Heart right ventricle (tissue), 16 donors: ENCODE measurements at regions of chr9 and their contacts with region 1.

Region 1: GRCh38 chr9:116646661-116647512 is 40.2 kb upstream of the TRIM32 start:
- DNase-seq: no peak
- ATAC-seq: peak; percentile 65 to 86 (median 76)
- H3K4me3 ChIP-seq: no peak overlapping the region
- H3K27ac ChIP-seq: peak overlapping the region in 3 of 10 donors; percentile 4 to 53 (median 29)
- H3K4me1 ChIP-seq: peaks cover 0 to 35% (median 14%) of the 10 kb centered on the region in 9 donors
- H3K27me3 ChIP-seq: no peaks in the 10 kb centered on the region
- CTCF ChIP-seq: peak in 8 of 9 donors; percentile 29 to 71 (median 62)

Region 2: DNA sequence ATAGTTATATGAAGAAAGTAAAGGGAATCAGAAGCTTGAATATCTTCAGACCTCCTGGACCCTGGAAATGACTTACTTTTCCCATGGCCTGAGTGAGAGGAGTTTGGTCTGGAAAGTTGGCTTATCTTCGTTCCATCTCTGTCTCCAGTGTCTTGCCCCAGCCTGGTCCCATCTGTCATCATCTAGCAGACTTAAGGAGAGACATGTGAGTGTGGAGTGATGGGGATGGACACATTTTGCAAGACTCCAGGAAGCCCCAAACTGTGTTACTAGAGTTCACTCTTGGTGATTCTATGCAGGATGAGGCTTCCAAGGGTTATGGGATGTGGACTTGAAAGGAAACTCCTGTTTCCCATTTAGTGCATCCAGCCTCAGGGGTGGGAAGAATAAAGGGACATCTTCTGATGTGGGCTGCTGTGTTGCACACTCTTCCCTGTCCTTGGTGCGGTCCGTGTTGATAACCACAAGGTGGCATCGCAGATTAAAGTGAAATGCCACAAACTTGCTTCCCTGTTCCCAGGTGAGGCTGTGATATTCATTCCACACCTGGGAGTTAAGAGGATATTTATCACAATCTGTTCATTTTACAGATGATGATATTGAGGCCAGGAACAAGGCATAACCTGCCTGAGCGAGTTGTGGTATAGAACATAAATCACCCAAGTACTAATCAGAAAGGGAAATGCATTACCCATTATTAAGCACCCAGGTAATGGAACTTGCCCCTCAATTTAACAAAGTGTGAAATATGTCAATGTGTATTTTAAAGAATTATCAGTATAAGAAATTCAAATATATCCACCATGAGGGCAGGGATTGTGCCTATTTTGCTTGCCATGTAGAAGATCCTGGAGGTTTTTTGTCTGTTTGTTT is 763.2 kb before region 1 on chr9:
- intact Hi-C with region 1: loop called in 3 of 10 experiments (anchors 10 kb)
- DNase-seq: peak in 1 of 2 donors; percentile 13
- ATAC-seq: peak in 6 of 8 donors; percentile 43 to 81 (median 64)
- H3K4me3 ChIP-seq: no peak overlapping the region
- H3K27ac ChIP-seq: no peak overlapping the region
- H3K4me1 ChIP-seq: no peaks in the 10 kb centered on the region
- H3K27me3 ChIP-seq: no peaks in the 10 kb centered on the region
- CTCF ChIP-seq: peak; percentile 11 to 66 (median 57)

Region 3: DNA sequence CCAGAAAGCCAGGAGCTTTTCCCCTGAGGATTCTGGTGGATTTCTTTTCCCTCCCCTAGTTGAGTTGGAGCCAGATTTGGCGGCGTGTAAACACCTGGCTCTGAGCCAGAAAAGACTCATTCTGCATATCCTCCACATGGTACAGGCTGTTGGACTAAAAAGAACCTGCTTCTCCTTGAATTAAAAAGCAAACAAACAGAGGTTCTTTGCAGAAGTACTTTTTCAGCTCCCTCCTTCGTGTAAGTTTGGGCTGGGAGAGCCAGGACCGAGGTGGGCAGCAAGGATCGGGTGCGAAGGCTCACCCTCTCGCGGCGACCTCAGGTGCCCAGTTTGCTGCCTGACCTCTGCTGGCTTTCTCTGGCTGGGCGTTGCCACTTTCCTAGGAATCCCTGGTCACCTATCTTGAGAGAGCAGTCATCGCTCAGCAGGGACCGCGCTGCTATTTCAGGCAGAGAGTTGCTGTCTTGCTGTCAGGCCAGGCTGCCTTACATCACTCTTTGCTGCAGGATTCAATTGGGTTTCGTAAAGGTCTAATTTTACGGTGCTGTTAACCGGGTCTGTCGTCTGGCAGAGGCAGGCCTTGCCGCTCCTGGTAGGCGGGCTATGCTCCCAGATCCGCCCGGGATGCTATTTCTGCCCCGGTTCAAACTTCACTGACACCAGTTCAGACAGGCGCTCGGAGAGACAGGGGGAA is 490.1 kb before region 1 on chr9:
- intact Hi-C with region 1: loop called in 7 of 10 experiments (anchors 5 to 10 kb)
- DNase-seq: peak; percentile 63 to 79
- ATAC-seq: peak; percentile 84 to 98 (median 94)
- H3K4me3 ChIP-seq: peak overlapping the region in 9 of 10 donors; percentile 3 to 65 (median 43)
- H3K27ac ChIP-seq: peak overlapping the region; percentile 74 to 95 (median 87)
- H3K4me1 ChIP-seq: peaks cover 6 to 41% (median 20%) of the 10 kb centered on the region in 9 donors
- H3K27me3 ChIP-seq: peaks cover 0 to 60% (median 5%) of the 10 kb centered on the region in 7 donors
- CTCF ChIP-seq: no peak

Region 4: GRCh38 chr9:116163293-116164055 is 483.4 kb before region 1 on chr9:
- intact Hi-C with region 1: loop called in 4 of 10 experiments (anchors 5 to 10 kb)
- DNase-seq: no peak
- ATAC-seq: peak in 4 of 8 donors; percentile 7 to 41 (median 24)
- H3K4me3 ChIP-seq: no peak overlapping the region
- H3K27ac ChIP-seq: no peak overlapping the region
- H3K4me1 ChIP-seq: peaks cover 0 to 8% (median 0%) of the 10 kb centered on the region in 9 donors
- H3K27me3 ChIP-seq: peaks cover 0 to 4% (median 0%) of the 10 kb centered on the region in 7 donors
- CTCF ChIP-seq: peak in 7 of 9 donors; percentile 37 to 53 (median 48)

Region 5: GRCh38 chr9:116494815-116495634 is 151.9 kb before region 1 on chr9:
- intact Hi-C with region 1: loop called in 3 of 10 experiments (anchors 10 kb)
- DNase-seq: peak in 1 of 2 donors; percentile 9
- ATAC-seq: peak in 1 of 8 donors; percentile 37
- H3K4me3 ChIP-seq: no peak overlapping the region
- H3K27ac ChIP-seq: no peak overlapping the region
- H3K4me1 ChIP-seq: peaks cover 0 to 9% (median 0%) of the 10 kb centered on the region in 9 donors
- H3K27me3 ChIP-seq: no peaks in the 10 kb centered on the region
- CTCF ChIP-seq: peak; percentile 35 to 76 (median 66)

Region 6: GRCh38 chr9:116939614-116940013 is 292.7 kb after region 1 on chr9:
- intact Hi-C with region 1: no loop called
- DNase-seq: no peak
- ATAC-seq: no peak
- H3K4me3 ChIP-seq: no peak overlapping the region
- H3K27ac ChIP-seq: no peak overlapping the region
- H3K4me1 ChIP-seq: no peaks in the 10 kb centered on the region
- H3K27me3 ChIP-seq: peaks cover 0 to 8% (median 0%) of the 10 kb centered on the region in 7 donors
- CTCF ChIP-seq: no peak